H1 (cell line): ENCODE measurements at regions of chr4 and their contacts with region 1.

Region 1: DNA sequence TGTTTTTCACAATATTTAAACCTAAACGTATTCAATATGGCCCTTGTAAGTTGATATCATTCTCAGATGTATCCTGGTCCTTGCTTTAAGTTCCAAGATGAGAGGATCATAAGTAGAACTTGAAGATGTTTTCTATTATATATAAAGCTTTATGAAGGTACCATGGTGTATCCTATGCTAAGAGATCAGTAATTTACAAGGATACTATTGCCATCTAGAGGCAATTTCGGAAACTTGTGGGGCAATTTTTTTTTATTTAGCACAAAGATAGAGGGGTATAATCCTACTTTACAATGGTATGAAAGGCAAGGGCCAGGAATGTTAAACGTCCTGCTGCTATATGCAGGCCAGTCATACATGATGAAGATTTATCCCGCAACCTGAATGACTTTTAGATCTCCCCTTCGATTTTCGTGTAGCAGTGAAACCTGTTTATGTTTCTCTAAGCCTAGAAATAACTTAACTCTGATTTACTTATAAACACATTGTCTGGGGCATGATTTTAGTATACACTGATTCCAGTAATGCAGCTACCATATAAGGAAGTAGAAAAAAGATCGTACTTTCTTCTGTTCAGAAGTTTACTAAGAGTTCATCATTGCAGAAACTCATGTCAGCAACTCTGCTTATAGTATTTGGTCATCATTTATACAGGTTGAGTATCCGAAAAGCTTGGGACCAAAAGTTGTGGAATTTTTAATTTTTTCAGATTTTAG is 2.6 kb downstream of the SLC25A31 start:
- DNase-seq: no peak
- H3K4me3 ChIP-seq: no peak overlapping the region
- H3K27ac ChIP-seq: no peak overlapping the region
- H3K4me1 ChIP-seq: no peaks in the 10 kb centered on the region
- H3K27me3 ChIP-seq: no peaks in the 10 kb centered on the region
- CTCF ChIP-seq: peak in 2 of 3 experiments; percentile 47 to 48; a peak in 2 of 4 replicates
- EP300 ChIP-seq: no peak
- POLR2A ChIP-seq: no peak
- RAD21 ChIP-seq: peak; percentile 68 to 76

Region 2: GRCh38 chr4:127604949-127605709 is 127.6 kb before region 1 on chr4:
- CTCF ChIA-PET with region 1: interaction called, 66 read pairs
- POLR2A ChIA-PET with region 1: interaction called, 4 read pairs
- DNase-seq: peak; percentile 61 to 64
- H3K4me3 ChIP-seq: peak overlapping the region in 2 of 4 experiments; percentile 5 to 41; a peak in 2 of 8 replicates
- H3K27ac ChIP-seq: no peak overlapping the region
- H3K4me1 ChIP-seq: peaks cover 0 to 5% (median 1%) of the 10 kb centered on the region in 4 experiments; a peak in 2 of 7 replicates
- H3K27me3 ChIP-seq: peaks cover 0 to 1% (median 0%) of the 10 kb centered on the region in 4 experiments; a peak in 1 of 7 replicates
- CTCF ChIP-seq: peak in 1 of 3 experiments; percentile 13; a peak in 1 of 4 replicates
- EP300 ChIP-seq: peak in 1 of 2 experiments; percentile 64; a peak in 1 of 3 replicates
- POLR2A ChIP-seq: no peak
- RAD21 ChIP-seq: peak in 1 of 2 experiments; percentile 49; a peak in 3 of 4 replicates

Region 3: GRCh38 chr4:127622921-127623656 is 109.7 kb before region 1 on chr4:
- CTCF ChIA-PET with region 1: interaction called, 12 read pairs
- POLR2A ChIA-PET with region 1: no interaction called
- DNase-seq: peak in 1 of 2 experiments; percentile 83
- H3K4me3 ChIP-seq: peak overlapping the region; percentile 52 to 74 (median 68)
- H3K27ac ChIP-seq: no peak overlapping the region
- H3K4me1 ChIP-seq: no peaks in the 10 kb centered on the region
- H3K27me3 ChIP-seq: peaks cover 1 to 25% (median 19%) of the 10 kb centered on the region in 4 experiments
- CTCF ChIP-seq: peak; percentile 50 to 62 (median 56)
- EP300 ChIP-seq: no peak
- POLR2A ChIP-seq: no peak
- RAD21 ChIP-seq: peak; percentile 40 to 58; a peak in 3 of 4 replicates

Region 4: DNA sequence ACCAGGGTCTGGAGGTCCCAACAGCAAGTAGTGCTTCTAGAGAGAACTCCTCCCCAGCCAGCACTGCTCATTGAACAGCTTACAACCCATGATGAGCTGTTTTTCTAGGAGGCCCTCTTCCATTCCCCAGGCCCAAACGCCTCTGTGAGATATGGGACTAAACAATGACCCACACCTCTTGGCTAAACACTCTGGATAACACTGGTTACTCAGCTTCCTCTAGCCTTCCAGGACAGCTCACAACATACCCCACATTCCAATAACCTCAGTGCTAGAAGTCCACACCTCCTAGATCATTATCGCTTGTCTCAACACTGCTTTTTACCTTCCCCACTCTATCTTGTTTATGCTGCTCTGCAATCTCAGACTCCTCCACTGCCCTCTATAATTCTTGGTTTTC is 590.2 kb after region 1 on chr4:
- CTCF ChIA-PET with region 1: no interaction called
- POLR2A ChIA-PET with region 1: no interaction called
- DNase-seq: no peak
- H3K4me3 ChIP-seq: no peak overlapping the region
- H3K27ac ChIP-seq: no peak overlapping the region
- H3K4me1 ChIP-seq: peaks cover 0 to 4% (median 3%) of the 10 kb centered on the region in 4 experiments; a peak in 3 of 7 replicates
- H3K27me3 ChIP-seq: no peaks in the 10 kb centered on the region
- CTCF ChIP-seq: no peak
- EP300 ChIP-seq: no peak
- POLR2A ChIP-seq: no peak
- RAD21 ChIP-seq: no peak